Astrocyte of the cerebellum (primary cell): ENCODE measurements at regions of chr12 and their contacts with region 1.

Region 1: DNA sequence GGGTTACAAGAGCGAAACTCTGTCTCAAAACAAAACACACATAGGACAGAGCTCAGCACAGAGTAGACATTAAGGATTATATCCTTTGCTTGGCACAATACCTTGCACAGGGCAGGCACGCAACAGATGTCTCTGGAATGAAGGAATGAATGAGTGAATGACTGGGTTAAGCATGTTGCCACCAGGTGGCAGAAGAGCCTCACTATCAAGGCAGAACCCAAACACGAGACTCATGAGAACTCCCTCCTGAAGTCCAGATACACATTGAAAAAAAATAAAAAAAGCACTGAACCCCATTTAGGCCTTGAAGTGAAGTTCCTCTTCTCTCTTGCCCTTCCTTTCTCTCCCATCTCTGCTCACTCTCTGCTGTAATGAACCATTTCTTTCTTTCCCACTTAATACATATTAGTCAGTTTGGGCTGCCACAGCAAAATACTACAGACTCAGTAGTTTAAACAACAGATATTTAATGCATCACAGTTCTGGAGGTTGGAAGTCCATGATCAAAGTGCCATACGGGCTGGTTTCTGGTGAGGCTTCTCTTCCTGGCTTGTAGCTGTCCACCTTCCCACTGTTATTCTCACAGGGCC is 26.6 kb upstream of the LTA4H start:
- DNase-seq: peak; percentile 80
- H3K4me3 ChIP-seq: no peak overlapping the region
- CTCF ChIP-seq: peak; percentile 81

Region 2: DNA sequence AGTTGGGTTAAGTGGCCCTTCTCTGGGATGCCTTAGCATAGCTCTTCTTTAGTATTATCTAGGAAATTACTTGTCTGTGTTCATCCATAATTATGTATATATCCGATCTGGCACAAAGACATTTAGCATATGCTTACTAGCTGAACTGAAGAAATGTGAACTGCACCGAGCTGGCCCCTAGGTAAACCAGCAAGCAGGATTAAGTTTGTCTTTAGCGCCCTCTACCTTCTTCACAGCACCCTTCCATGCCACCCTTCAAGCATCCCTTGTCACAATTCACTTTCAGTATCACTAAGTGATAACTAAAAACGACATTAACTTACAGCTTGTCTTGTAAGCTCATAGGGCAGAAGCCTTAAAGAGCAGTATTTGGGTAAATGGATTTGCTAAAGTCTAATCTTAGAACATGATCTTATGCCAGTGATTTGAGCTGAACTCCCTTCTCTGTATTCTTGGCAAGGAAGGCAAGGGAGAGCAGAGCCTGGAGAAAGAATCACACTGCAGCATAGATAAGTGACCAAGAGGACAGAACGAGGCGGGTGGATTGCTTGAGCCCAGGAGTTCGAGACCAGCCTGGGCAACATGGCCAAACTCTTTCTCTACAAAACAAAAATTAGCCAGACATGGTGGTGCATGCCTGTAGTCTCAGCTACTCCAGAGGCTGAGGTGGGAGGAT is 63.2 kb before region 1 on chr12:
- in situ Hi-C with region 1: no loop called
- DNase-seq: peak; percentile 29
- H3K4me3 ChIP-seq: no peak overlapping the region
- CTCF ChIP-seq: peak; percentile 70

Region 3: GRCh38 chr12:96219698-96220206 is 157.8 kb after region 1 on chr12:
- in situ Hi-C with region 1: loop called (anchors 25 kb)
- DNase-seq: peak; percentile 69
- H3K4me3 ChIP-seq: no peak overlapping the region
- CTCF ChIP-seq: no peak

Region 4: DNA sequence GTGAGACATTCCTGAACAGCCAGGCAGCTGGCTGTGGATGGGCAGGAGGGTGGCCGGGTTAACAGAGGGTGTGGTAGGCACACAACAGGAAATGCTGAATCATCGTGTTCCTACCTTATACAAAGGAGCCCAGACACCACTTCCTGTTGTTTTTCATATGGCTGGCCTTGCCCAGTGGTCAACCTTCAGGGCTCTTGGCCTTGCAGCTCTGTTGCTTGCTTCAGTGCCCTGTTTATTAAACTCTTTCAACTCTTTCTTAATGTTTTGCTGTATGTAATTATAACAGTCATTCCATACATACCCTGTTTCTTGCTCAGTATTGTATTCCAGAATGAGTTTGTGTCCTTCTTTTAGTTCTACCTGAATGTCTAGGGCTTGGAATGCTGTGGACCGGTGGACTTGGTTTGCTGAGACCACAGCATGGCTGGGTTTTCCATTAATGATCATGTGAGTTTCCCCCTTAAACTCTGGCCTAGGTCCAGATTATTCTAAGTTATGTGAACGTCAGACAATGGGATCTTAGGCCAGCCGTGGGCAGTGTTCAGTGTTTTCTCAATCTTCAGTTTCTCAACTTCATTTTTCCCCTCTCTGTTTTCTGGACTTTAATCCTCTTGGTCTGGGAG is 439.3 kb after region 1 on chr12:
- in situ Hi-C with region 1: loop called (anchors 10 kb)
- DNase-seq: no peak
- H3K4me3 ChIP-seq: no peak overlapping the region
- CTCF ChIP-seq: no peak